PC-9 (cell line): ENCODE measurements at regions of chr3 and their contacts with region 1.

Region 1: DNA sequence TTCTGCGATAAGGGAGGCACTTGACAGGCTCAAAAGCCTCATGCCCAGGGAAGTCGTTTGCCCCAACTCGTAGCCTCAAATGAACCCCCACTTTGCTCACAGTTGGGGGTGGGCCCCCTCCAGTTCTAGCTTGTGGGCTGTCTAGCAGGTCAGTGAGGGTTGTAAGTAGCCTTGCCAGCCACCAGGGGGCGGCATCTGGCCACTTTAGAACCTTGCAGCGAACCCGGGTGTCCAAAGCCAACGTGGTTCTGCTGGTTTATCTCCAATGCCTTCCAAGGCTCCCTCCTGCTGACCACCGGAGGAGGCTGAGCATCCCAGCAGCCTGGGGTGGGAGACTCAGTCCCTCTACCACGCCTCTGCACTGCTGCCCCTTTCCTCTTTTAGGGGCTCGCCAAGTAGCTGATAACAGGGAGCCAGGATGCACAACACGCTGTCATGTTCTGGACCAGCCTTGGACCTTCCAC is 9.2 kb upstream of the RBSN start:
- DNase-seq: peak in 1 of 2 experiments; percentile 62
- H3K4me3 ChIP-seq: no peak overlapping the region
- H3K27ac ChIP-seq: no peak overlapping the region
- H3K4me1 ChIP-seq: no peaks in the 10 kb centered on the region
- H3K27me3 ChIP-seq: peaks cover 11% of the 10 kb centered on the region; the same call in 1 of the 2 replicates
- CTCF ChIP-seq: peak; percentile 94

Region 2: DNA sequence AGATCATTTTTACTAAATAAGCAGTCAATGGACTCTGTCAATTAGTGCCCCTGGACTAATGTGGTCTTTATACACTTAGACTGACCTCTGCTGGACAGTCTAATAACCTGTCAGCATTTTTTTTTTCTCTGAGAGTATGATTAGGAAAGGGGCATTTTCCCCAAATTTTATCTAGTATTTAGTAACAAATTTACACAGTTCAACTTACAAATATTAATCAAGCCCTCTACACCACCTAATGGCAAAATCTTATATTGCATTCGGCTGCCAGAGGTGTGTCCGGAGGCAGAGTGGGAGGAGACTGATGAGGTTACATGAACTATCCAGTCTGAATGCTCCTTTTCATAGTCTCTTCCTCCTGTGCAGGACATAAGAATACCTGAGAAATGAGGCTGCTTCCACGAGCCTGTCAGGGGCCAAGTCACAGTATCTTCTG is 449.4 kb after region 1 on chr3:
- CTCF ChIA-PET with region 1: no interaction called
- POLR2A ChIA-PET with region 1: no interaction called
- intact Hi-C with region 1: loop called (anchors 5 kb)
- DNase-seq: peak; percentile 70 to 77
- H3K4me3 ChIP-seq: no peak overlapping the region
- H3K27ac ChIP-seq: no peak overlapping the region
- H3K4me1 ChIP-seq: 0 out of 2 replicates have a peak, but pooled peaks cover 3% of the 10 kb centered on the region
- H3K27me3 ChIP-seq: no peaks in the 10 kb centered on the region
- CTCF ChIP-seq: peak; percentile 85